CD8-positive, alpha-beta T cell (primary cell): ENCODE measurements at regions of chr21 and their contacts with region 1.

Region 1: GRCh38 chr21:28856588-28857250 is 136.0 kb downstream of the LTN1 start:
- DNase-seq: no peak
- ATAC-seq: no peak
- H3K4me3 ChIP-seq: no peak overlapping the region
- H3K4me3 Mint-ChIP-seq: no peak overlapping the region
- H3K27ac ChIP-seq: no peak overlapping the region
- H3K27ac Mint-ChIP-seq: no peak overlapping the region
- H3K4me1 ChIP-seq: no peaks in the 10 kb centered on the region
- H3K4me1 Mint-ChIP-seq: peaks cover 4% of the 10 kb centered on the region
- H3K27me3 ChIP-seq: no peaks in the 10 kb centered on the region
- H3K27me3 Mint-ChIP-seq: no peaks in the 10 kb centered on the region
- CTCF ChIP-seq: no peak

Region 2: DNA sequence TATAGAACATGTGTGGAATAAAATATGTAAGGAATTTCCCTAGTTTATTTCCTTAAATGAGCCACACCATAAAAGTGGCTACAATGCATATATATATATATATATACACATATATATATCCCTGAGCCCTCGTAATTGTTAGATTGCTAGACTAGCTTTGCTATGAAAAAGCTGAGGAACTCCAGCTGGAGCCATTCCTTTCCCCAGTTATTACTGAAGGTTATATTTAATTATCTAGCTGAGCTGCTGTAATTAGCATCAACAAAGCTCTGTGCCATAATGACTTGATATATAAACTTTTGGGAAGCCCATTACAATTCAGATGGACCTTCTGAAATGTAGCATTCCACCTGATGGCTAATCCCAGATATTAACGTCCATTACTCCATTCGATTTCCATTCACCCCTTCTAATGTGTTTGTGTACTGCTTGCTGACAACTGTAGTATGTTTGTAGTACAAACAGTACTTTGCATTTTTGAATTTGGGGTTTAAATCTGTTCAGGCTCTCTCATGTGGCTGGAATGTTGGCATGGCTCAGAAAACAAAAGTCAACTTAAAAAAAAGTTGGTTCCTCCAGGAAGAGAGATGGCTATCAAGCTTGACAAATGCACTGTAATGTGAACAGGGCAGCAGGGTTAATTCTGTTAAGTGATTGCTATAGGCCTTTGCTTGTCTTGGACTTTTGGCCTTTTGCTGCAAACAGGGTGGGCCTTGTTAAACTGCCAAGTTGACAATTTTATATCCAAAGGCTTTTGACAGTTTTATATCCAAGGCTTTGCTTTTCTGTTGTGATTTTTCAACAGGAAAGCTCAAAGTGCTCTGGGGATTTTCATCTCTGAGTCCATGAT is 34.0 kb before region 1 on chr21:
- CTCF ChIA-PET with region 1: no interaction called
- POLR2A ChIA-PET with region 1: no interaction called
- intact Hi-C with region 1: loop called in 1 of 2 experiments (anchors 5 kb)
- DNase-seq: no peak
- ATAC-seq: no peak
- H3K4me3 ChIP-seq: no peak overlapping the region
- H3K4me3 Mint-ChIP-seq: no peak overlapping the region
- H3K27ac ChIP-seq: no peak overlapping the region
- H3K27ac Mint-ChIP-seq: no peak overlapping the region
- H3K4me1 ChIP-seq: no peaks in the 10 kb centered on the region
- H3K4me1 Mint-ChIP-seq: peaks cover 21% of the 10 kb centered on the region
- H3K27me3 ChIP-seq: no peaks in the 10 kb centered on the region
- H3K27me3 Mint-ChIP-seq: no peaks in the 10 kb centered on the region
- CTCF ChIP-seq: no peak